Posterior cingulate gyrus (tissue), 11 donors: ENCODE measurements at regions of chr3 and their contacts with region 1.

Region 1: GRCh38 chr3:183252973-183253901 is at the start of gene B3GNT5:
- DNase-seq: peak in 8 of 10 donors; percentile 14 to 93 (median 52)

Region 2: GRCh38 chr3:183046883-183047282 is 206.4 kb before region 1 on chr3:
- intact Hi-C with region 1: no loop called
- DNase-seq: no peak

Region 3: GRCh38 chr3:183275418-183275817 is 22.2 kb after region 1 on chr3:
- intact Hi-C with region 1: loop called (anchors 1 kb)
- DNase-seq: no peak

Region 4: DNA sequence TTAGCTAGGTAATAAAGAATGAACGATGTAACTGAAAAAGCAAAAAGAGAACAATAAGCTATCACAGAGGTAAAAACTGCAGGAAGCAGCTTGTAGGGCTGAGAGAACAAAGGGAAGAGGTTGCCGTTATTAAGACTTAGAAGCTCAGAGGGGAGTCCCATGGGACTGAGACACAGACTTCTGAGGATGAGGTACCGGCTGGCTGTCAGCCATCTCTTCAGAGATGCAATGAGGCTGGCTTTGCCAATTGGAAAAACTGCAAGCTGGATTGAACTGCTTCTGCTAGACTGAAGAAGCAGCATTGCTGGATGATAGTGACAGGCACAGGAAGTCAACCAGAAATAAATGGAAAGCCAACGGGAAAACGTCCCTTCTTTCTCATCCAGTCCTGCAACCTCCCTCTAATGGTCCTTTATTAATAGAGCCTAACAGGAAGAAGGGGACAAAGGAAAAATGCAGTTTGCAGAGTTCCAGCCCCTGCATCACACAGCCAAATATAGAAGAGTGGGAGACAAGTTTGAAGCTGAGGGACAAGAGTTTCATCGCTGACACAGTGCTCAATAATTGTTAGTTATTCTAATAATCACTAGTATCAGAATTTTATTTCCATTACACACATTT is 323.4 kb after region 1 on chr3:
- intact Hi-C with region 1: no loop called
- DNase-seq: peak in 1 of 10 donors; percentile 37